PC-9 (cell line): ENCODE measurements at regions of chr12 and their contacts with region 1.

Region 1: DNA sequence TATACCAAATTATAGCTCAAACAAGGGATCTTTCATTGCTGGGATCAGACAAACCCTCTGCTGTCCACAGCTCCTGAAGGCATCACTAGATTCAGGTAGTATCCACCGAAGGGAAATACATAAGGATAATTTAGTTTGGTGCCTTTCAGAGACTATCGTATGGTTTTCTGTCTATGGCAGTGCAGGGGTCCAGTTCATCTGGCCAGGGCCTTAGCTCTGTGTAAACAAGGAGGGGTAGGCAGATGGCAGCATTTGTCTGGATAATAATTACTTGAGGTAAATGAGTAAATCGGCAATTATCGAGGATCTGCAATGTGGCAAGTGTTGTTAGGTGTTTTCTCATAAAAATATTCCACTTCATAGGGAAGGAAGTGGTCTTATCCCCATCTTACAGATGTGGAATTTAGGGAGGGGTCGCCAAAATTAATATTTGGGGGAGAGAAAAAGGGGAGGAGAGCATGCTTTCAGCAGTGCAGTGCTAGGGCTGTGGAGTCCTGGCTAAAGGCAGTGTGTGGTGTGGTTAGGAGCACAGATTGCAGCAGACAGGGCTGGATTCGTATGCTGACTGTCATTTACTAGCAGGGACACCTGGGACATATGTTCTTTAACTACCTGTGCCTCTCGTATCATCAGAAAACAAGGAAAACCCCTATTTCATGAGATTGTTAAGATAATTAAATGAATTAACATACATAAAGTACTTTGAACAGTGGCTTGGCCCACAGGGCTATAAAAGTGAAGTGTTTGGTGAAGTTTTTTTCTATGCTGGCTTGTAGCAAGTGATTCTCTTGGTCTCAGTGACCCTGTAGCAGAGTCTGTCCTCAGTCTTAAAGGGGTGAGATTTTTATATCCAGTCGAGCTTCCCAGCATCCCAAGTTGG is 27.1 kb downstream of the RASSF8 start:
- DNase-seq: no peak
- H3K4me3 ChIP-seq: no peak overlapping the region
- H3K27ac ChIP-seq: no peak overlapping the region
- H3K4me1 ChIP-seq: no peaks in the 10 kb centered on the region
- H3K27me3 ChIP-seq: no peaks in the 10 kb centered on the region
- CTCF ChIP-seq: no peak

Region 2: DNA sequence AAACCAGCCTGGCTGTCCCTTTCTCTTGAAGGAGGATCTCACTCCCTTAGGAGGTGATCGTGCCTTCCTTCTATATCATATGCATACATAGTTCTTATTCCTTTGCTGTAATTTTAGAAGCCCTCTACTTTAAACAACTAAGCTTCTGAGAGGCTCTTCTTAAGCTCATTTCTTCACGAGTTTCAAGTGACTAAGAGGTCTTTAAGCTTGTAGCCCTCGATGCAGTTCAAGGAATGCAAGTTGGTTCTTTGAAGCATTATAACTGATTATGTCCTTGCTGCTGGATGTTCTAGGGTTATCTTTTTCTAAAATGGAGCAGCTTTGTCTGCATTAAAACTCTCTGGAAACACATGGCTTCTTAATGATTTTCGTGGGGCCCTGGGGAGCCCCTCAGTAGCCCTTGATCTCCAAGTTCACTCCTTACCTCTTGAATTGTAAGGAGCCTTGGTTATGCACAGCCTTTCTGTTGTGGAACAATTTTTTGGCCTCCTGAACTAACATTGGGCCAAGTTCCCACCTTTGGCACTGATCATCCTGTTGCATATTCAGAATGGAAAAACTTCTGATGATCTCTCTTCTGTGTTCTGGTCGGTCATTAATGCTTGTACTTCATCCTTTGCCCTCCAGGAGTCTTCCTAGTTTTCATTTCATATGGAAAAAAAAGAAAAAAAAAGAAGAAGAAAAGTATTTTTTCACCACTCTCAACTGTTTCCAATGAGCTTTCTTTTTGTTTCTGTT is 14.5 kb before region 1 on chr12:
- CTCF ChIA-PET with region 1: no interaction called
- POLR2A ChIA-PET with region 1: interaction called, 10 read pairs
- intact Hi-C with region 1: no loop called
- DNase-seq: no peak
- H3K4me3 ChIP-seq: no peak overlapping the region
- H3K27ac ChIP-seq: no peak overlapping the region
- H3K4me1 ChIP-seq: no peaks in the 10 kb centered on the region
- H3K27me3 ChIP-seq: no peaks in the 10 kb centered on the region
- CTCF ChIP-seq: no peak

Region 3: GRCh38 chr12:26768611-26769603 is 783.4 kb after region 1 on chr12:
- CTCF ChIA-PET with region 1: no interaction called
- POLR2A ChIA-PET with region 1: interaction called, 10 read pairs
- intact Hi-C with region 1: no loop called
- DNase-seq: peak; percentile 16 to 81
- H3K4me3 ChIP-seq: no peak overlapping the region
- H3K27ac ChIP-seq: no peak overlapping the region
- H3K4me1 ChIP-seq: peaks cover 15% of the 10 kb centered on the region
- H3K27me3 ChIP-seq: no peaks in the 10 kb centered on the region
- CTCF ChIP-seq: no peak